ENCODE measurements at regions of chr12 and their contacts with region 1.

Region 1: DNA sequence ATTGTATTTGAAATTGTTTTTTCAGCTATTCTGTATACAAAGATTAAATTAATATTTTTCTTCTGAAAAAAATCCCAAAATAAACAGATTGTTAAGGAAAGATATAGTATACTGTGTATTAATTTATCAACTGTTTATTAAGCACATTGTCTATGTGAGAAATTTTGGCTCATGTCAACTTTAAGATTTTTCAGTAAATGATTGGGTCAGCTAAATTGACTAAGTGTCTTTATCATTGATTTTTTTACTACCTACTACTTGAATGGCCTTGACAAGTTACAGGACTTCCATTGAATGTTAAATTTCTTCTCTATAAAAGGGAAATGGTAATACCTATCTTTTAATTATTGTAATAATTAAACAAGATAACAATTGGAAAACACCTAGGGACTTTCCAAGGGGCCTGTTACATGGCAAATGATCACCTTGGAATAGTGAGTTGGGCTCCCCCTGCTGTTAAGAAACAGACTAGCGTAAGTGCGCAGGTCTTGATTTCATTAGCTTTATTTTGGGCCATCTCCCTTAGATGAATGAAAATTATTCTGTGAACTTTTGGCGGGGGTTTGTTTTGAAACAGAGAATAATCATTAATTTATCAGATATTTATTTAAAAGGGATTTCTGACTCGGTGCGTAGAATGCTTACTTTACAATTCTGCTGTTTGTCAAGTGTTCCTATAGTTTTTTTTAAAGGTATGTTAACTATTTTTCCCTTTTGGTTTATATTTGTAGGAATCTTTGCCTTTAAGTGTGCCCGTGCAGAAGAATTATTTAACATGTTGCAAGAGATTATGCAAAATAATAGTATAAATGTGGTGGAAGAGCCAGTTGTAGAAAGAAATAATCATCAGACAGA is 14.5 kb upstream of the CCT2 start:
- H3K4me3 ChIP-seq: no peak overlapping the region
- H3K27ac ChIP-seq: no peak overlapping the region
- H3K4me1 ChIP-seq: no peaks in the 10 kb centered on the region
- CTCF ChIP-seq: no peak

Region 2: DNA sequence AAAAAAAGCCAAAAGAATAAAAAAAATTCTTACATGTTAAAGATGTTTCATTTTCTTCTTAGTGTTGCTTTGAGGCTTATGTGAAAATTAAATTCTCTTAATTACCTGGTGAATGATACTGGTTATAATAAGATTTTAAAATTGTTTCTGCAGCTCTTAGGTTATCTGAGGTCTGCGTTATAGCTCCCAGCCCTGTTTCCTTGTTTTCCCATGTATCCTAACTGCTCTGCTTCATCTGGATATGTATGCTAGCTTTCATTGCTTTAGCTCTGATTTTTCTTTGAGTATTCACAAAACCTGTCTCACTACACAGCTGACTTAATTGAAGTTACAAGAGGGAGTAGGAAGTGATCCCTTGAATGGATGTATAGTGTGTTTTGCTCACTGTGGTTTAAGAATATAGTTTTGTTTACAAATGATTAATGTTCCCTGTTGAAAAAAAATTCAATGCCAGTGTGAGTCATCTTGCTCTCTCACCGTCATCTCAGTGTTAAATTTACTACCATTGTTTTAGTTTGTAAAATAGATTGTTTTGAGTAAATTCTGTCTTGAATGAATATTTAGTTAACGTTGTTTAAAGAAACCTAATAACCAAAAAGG is 304.6 kb before region 1 on chr12:
- CTCF ChIA-PET with region 1: no interaction called
- POLR2A ChIA-PET with region 1: no interaction called
- H3K4me3 ChIP-seq: no peak overlapping the region
- H3K27ac ChIP-seq: no peak overlapping the region
- H3K4me1 ChIP-seq: peaks cover 4% of the 10 kb centered on the region; the same call in 1 of the 2 replicates
- CTCF ChIP-seq: no peak

Region 3: GRCh38 chr12:69290545-69291277 is 280.1 kb before region 1 on chr12:
- CTCF ChIA-PET with region 1: interaction called, 12 read pairs
- POLR2A ChIA-PET with region 1: no interaction called
- H3K4me3 ChIP-seq: no peak overlapping the region
- H3K27ac ChIP-seq: no peak overlapping the region
- H3K4me1 ChIP-seq: no peaks in the 10 kb centered on the region
- CTCF ChIP-seq: peak; percentile 88

Region 4: GRCh38 chr12:69388371-69388770 is 182.4 kb before region 1 on chr12:
- CTCF ChIA-PET with region 1: interaction called, 11 read pairs
- POLR2A ChIA-PET with region 1: no interaction called
- H3K4me3 ChIP-seq: no peak overlapping the region
- H3K27ac ChIP-seq: no peak overlapping the region
- H3K4me1 ChIP-seq: no peaks in the 10 kb centered on the region
- CTCF ChIP-seq: no peak

Region 5: GRCh38 chr12:69540987-69541386 is 29.8 kb before region 1 on chr12:
- CTCF ChIA-PET with region 1: interaction called, 13 read pairs
- POLR2A ChIA-PET with region 1: no interaction called
- H3K4me3 ChIP-seq: no peak overlapping the region
- H3K27ac ChIP-seq: no peak overlapping the region
- H3K4me1 ChIP-seq: no peaks in the 10 kb centered on the region
- CTCF ChIP-seq: no peak

Region 6: DNA sequence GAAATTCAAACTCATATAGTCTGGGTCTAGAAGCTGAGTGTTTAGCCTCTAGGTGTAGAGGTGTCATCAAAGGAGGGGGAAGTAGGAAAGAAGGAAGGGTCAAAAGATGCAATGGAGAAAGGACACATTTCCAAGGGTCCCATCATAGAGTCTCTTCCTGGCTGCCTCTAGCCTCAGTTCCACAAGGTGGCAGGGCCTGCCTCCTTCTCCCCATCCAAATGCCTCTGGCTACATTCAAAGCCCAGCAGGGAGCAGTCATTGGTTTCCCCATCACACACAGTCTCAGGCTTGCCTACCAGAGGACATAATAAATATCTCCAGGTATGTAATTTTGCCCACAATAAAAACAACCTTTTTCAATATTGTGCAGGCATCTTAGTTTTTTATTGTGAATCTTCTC is 12.4 kb after region 1 on chr12:
- CTCF ChIA-PET with region 1: interaction called, 16 read pairs
- POLR2A ChIA-PET with region 1: no interaction called
- H3K4me3 ChIP-seq: no peak overlapping the region
- H3K27ac ChIP-seq: no peak overlapping the region
- H3K4me1 ChIP-seq: no peaks in the 10 kb centered on the region
- CTCF ChIP-seq: peak; percentile 33; the same call in 1 of the 2 replicates

Region 7: GRCh38 chr12:69630191-69630590 is 59.4 kb after region 1 on chr12:
- CTCF ChIA-PET with region 1: no interaction called
- POLR2A ChIA-PET with region 1: no interaction called
- H3K4me3 ChIP-seq: no peak overlapping the region
- H3K27ac ChIP-seq: no peak overlapping the region
- H3K4me1 ChIP-seq: no peaks in the 10 kb centered on the region
- CTCF ChIP-seq: no peak